A673 (cell line): ENCODE measurements at regions of chr2 and their contacts with region 1.

Region 1: GRCh38 chr2:70919672-70920366 is 15.9 kb upstream of the ATP6V1B1 start:
- DNase-seq: peak; percentile 80
- H3K4me3 ChIP-seq: no peak overlapping the region
- H3K27ac ChIP-seq: no peak overlapping the region
- H3K4me1 ChIP-seq: no peaks in the 10 kb centered on the region
- H3K27me3 ChIP-seq: no peaks in the 10 kb centered on the region
- CTCF ChIP-seq: peak; percentile 91

Region 2: GRCh38 chr2:70871398-70872211 is 48.2 kb before region 1 on chr2:
- CTCF ChIA-PET with region 1: interaction called, 8 read pairs
- POLR2A ChIA-PET with region 1: no interaction called
- intact Hi-C with region 1: loop called (anchors 1 kb)
- DNase-seq: peak; percentile 86
- H3K4me3 ChIP-seq: peak overlapping the region; percentile 14
- H3K27ac ChIP-seq: no peak overlapping the region
- H3K4me1 ChIP-seq: peaks cover 7% of the 10 kb centered on the region
- H3K27me3 ChIP-seq: no peaks in the 10 kb centered on the region
- CTCF ChIP-seq: peak; percentile 93

Region 3: DNA sequence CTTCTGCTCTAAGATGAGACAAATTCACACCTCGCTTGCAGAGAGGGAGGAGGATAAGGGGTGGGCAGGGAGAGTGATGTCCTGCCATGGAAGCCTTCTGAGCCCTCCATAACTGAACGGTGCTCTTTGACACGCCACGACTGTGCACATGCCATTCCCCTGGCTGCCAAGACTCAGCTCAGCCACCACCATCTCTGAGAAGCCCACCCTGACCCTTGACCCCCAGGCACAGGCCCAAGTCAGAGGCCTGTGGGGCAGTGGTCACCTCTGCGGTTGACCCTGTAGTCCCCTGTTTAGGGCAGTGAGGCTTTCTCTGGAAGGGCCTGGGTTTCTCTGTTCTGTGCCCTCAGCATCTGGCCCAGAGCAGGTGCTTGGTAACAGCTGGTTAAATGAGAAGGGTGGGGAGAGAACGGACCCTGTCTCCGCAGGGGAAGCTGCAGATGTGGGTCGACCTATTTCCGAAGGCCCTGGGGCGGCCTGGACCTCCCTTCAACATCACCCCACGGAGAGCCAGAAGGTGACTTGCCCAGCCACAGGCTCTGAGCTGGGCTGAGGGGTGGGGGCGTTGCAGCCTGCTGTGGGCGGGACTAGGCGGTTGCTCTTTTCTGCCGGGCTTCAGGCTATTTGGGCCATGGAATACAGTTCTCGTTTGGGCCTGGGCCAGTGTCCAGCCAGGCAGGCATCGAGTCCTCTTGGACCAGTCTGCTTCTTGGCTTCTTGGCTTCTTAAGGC is 748.7 kb after region 1 on chr2:
- CTCF ChIA-PET with region 1: no interaction called
- POLR2A ChIA-PET with region 1: no interaction called
- intact Hi-C with region 1: no loop called
- DNase-seq: no peak
- H3K4me3 ChIP-seq: no peak overlapping the region
- H3K27ac ChIP-seq: no peak overlapping the region
- H3K4me1 ChIP-seq: no peaks in the 10 kb centered on the region
- H3K27me3 ChIP-seq: no peaks in the 10 kb centered on the region
- CTCF ChIP-seq: no peak